K562 (cell line): ENCODE measurements at regions of chr5 and their contacts with region 1.

Region 1: DNA sequence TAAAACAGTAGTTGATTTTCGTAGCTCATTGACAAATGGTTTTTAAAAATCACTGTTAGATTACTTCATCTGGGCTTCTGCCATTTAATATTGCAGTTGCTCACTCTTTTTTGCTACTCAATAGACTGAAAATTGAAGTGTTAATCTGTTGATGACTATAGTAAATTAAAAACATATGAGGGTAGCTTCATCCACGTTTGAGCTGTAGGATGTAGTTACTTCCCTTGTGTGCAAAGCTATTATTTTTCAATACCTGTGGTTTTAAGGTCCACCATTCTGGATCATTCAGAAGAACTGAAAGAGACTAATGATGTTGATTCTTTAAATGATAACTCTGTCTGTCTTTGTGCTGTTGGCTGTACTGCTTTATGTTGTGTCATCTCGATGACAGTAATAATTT is 74.7 kb downstream of the LNPEP start:
- DNase-seq: no peak
- ATAC-seq: no peak
- H3K4me3 ChIP-seq: no peak overlapping the region
- H3K27ac ChIP-seq: no peak overlapping the region
- H3K4me1 ChIP-seq: peaks cover 0 to 8% of the 10 kb centered on the region in 2 experiments; a peak in 1 of 5 replicates
- H3K27me3 ChIP-seq: no peaks in the 10 kb centered on the region
- CTCF ChIP-seq: no peak
- EP300 ChIP-seq: no peak
- POLR2A ChIP-seq: no peak
- RAD21 ChIP-seq: no peak

Region 2: DNA sequence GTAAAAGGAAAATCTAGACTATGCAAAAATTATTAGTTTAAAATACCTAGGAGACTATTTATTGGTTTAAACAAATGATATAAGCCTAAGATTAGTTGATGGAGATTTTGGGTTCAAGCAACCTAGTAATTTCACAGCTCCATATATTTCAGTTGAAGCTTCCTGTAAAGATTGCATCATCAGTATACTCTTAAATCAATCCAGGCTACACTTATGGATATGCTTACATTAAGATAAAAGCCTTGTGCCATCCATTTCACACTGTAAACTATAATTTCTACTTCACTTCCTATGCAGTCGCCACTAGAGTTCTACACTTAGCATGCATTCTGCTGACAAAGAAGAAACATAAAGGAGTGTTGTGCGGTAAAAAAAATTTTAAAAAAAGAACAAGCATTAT is 139.1 kb after region 1 on chr5:
- CTCF ChIA-PET with region 1: no interaction called
- POLR2A ChIA-PET with region 1: no interaction called
- in situ Hi-C with region 1: loop called (anchors 5 kb)
- intact Hi-C with region 1: no loop called
- DNase-seq: no peak
- ATAC-seq: peak; percentile 49; the same call in 2 of the 3 replicates
- H3K4me3 ChIP-seq: no peak overlapping the region
- H3K27ac ChIP-seq: no peak overlapping the region
- H3K4me1 ChIP-seq: no peaks in the 10 kb centered on the region; a peak in 1 of 5 replicates
- H3K27me3 ChIP-seq: no peaks in the 10 kb centered on the region
- CTCF ChIP-seq: no peak
- EP300 ChIP-seq: no peak
- POLR2A ChIP-seq: no peak
- RAD21 ChIP-seq: no peak